ENCODE measurements at regions of chr1 and their contacts with region 1.

Region 1: GRCh38 chr1:207084701-207085180 is 3.9 kb upstream of the C4BPB start:
- DNase-seq: peak; percentile 68
- H3K4me3 Mint-ChIP-seq: no peak overlapping the region
- H3K27ac Mint-ChIP-seq: no peak overlapping the region
- H3K4me1 Mint-ChIP-seq: peaks cover 34% of the 10 kb centered on the region
- H3K27me3 Mint-ChIP-seq: peaks cover 13% of the 10 kb centered on the region

Region 2: DNA sequence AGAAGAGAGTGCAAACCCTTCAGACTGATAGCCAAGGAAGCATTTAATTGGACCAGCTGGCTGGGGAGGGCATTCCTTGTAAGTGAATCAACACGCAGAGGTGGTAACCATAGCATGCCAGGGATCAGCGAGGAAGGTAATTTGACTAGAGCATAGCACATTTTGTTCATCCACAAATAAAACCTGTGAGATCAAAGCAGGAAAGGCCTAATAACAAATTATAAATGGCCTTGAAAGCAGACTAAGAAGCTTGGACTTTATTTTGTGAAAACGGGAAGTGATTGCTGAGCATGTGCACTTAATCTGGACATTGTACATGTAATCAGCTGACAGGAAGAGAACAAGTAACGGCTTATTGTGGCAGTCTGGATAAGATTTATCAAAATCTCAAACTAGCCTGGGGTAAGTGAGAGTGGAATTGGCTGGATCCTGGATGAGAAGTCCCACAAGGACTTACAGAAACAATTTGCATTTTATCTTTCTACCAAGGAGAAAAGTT is 225.1 kb after region 1 on chr1:
- CTCF ChIA-PET with region 1: no interaction called
- DNase-seq: no peak
- H3K4me3 Mint-ChIP-seq: no peak overlapping the region
- H3K27ac Mint-ChIP-seq: no peak overlapping the region
- H3K4me1 Mint-ChIP-seq: peaks cover 20% of the 10 kb centered on the region
- H3K27me3 Mint-ChIP-seq: no peaks in the 10 kb centered on the region

Region 3: GRCh38 chr1:207499573-207499972 is 414.8 kb after region 1 on chr1:
- CTCF ChIA-PET with region 1: interaction called, 29 read pairs
- DNase-seq: peak; percentile 84
- H3K4me3 Mint-ChIP-seq: no peak overlapping the region
- H3K27ac Mint-ChIP-seq: no peak overlapping the region
- H3K4me1 Mint-ChIP-seq: peaks cover 13% of the 10 kb centered on the region
- H3K27me3 Mint-ChIP-seq: peaks cover 42% of the 10 kb centered on the region

Measured in activated naive CD4-positive, alpha-beta T cell treated with anti-CD3 and anti-CD28 coated beads, Interleukin-2, amount 10 ng/mL, durations not matched to agents 7 days and 5 days (primary cell).